ENCODE measurements at regions of chr16 and their contacts with region 1.

Region 1: GRCh38 chr16:29011112-29011511 is 26.3 kb downstream of the LAT start:
- DNase-seq: peak; percentile 58
- ATAC-seq: peak; percentile 90
- H3K4me3 Mint-ChIP-seq: no peak overlapping the region
- H3K27ac Mint-ChIP-seq: no peak overlapping the region
- H3K4me1 Mint-ChIP-seq: no peaks in the 10 kb centered on the region
- H3K27me3 Mint-ChIP-seq: no peaks in the 10 kb centered on the region
- CTCF ChIP-seq: no peak

Region 2: DNA sequence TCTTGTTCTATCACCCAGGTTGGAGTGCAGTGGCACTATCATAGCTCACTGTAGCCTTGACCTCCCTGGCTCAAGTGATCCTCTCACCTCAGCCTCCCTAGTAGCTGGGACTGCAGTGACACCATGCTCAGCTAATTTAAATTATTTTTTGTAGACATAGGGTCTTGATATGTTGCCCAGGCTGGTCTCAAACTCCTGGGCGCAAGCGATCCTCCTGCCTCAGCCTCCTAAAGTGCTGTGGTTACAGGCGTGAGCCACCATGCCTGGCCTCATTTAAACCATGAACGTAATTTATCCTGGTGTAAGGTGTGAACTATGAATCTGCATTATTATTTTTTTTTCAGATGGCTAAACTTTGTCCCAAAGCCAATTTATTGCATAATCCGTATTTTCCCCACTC is 11.1 kb after region 1 on chr16:
- CTCF ChIA-PET with region 1: interaction called, 15 read pairs
- POLR2A ChIA-PET with region 1: no interaction called
- DNase-seq: no peak
- ATAC-seq: no peak
- H3K4me3 Mint-ChIP-seq: no peak overlapping the region
- H3K27ac Mint-ChIP-seq: no peak overlapping the region
- H3K4me1 Mint-ChIP-seq: no peaks in the 10 kb centered on the region
- H3K27me3 Mint-ChIP-seq: no peaks in the 10 kb centered on the region
- CTCF ChIP-seq: no peak

Region 3: DNA sequence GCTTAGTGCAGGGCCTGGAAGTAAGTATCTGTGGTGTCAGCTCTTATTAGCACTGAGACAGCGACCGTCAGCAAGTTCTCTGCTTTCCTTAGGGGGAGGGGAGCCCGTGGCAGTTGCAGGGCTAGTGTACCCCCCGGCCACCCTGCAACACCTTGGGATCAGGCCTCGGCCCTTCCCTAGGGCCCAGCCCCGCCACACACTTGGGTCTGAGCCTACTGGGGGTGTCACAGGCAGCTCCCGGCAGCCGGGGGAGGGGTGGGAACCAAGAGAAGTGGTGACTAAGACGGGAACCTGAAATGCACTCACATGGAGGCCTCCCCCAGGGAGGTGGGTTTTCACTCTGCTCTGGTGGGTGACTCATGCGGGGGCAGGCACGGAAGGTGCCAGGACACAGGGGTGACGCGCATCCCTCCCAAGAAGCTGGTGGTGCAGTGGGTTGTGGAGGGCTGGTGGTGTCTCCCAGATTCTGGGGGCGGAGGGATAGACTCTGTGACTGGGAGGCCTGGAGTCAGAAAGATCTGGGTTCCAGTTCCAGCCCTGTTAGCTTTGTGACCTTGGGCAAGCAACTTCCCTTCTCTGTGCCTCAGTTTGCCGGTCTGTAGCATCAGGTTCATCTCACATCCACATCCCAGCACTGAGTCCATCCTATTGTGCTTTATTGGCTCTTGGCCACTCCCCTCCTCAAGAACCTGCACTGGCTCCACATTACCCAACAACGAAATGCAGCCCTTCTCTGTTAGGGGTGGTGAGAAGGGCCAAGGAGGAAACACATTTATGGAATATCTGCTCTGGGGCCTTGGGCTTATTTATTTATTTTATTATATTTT is 18.3 kb after region 1 on chr16:
- CTCF ChIA-PET with region 1: interaction called, 15 read pairs
- POLR2A ChIA-PET with region 1: no interaction called
- DNase-seq: peak; percentile 32
- ATAC-seq: peak; percentile 61
- H3K4me3 Mint-ChIP-seq: no peak overlapping the region
- H3K27ac Mint-ChIP-seq: no peak overlapping the region
- H3K4me1 Mint-ChIP-seq: peaks cover 13% of the 10 kb centered on the region
- H3K27me3 Mint-ChIP-seq: no peaks in the 10 kb centered on the region; the same call in 1 of the 2 replicates
- CTCF ChIP-seq: no peak

Measured in WTC11 (cell line).